Mammary epithelial cell (primary cell): ENCODE measurements at regions of chr11 and their contacts with region 1.

Region 1: GRCh38 chr11:3160252-3161031 is 4.7 kb downstream of the OSBPL5 start:
- DNase-seq: peak; percentile 75
- H3K4me3 ChIP-seq: peak overlapping the region; percentile 26 to 58 (median 46)
- H3K27ac ChIP-seq: no peak overlapping the region
- H3K4me1 ChIP-seq: peaks cover 48% of the 10 kb centered on the region
- H3K27me3 ChIP-seq: no peaks in the 10 kb centered on the region
- CTCF ChIP-seq: no peak

Region 2: DNA sequence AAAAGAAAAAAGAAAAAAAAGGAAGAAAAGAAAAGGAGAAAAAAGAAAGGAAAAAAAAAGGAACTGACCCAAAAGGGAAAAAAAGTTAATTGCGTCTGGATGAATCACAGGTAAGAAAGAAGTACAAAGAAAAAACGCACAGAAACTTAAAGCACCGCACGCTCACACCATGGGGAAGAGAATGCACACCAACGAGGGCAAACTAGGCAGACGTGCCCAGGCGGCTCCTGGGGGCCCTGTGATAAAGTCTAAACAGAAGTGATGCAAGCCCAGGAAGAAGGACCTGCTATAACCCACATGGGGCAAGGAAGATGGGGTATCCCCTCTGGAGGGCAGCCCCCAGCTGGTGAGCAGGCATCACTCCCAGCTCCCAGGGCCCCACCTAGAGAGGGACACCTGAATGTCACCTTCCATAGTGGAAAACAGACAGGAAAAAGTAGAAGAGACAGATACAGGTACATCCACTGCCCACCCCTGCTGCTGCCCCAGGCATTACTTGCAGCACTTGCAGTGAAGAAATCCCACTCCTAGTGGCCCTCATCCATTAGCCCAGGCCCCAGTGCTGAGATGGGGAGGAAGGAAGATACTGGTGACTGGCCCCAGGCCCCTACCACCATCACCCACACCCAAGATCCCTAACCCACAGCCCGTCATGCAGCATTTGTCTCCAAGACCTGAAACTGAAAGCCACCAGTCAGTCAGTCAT is 197.2 kb before region 1 on chr11:
- CTCF ChIA-PET with region 1: no interaction called
- dilution Hi-C with region 1: no loop called
- in situ Hi-C with region 1: no loop called
- intact Hi-C with region 1: no loop called
- DNase-seq: peak; percentile 29
- H3K4me3 ChIP-seq: no peak overlapping the region
- H3K27ac ChIP-seq: no peak overlapping the region
- H3K4me1 ChIP-seq: peaks cover 8% of the 10 kb centered on the region
- H3K27me3 ChIP-seq: no peaks in the 10 kb centered on the region
- CTCF ChIP-seq: no peak

Region 3: GRCh38 chr11:3109921-3110706 is 50.3 kb before region 1 on chr11:
- CTCF ChIA-PET with region 1: no interaction called
- dilution Hi-C with region 1: no loop called
- in situ Hi-C with region 1: no loop called
- intact Hi-C with region 1: loop called (anchors 2 kb)
- DNase-seq: peak; percentile 34
- H3K4me3 ChIP-seq: no peak overlapping the region
- H3K27ac ChIP-seq: no peak overlapping the region
- H3K4me1 ChIP-seq: no peaks in the 10 kb centered on the region
- H3K27me3 ChIP-seq: no peaks in the 10 kb centered on the region
- CTCF ChIP-seq: peak; percentile 61 to 77

Region 4: DNA sequence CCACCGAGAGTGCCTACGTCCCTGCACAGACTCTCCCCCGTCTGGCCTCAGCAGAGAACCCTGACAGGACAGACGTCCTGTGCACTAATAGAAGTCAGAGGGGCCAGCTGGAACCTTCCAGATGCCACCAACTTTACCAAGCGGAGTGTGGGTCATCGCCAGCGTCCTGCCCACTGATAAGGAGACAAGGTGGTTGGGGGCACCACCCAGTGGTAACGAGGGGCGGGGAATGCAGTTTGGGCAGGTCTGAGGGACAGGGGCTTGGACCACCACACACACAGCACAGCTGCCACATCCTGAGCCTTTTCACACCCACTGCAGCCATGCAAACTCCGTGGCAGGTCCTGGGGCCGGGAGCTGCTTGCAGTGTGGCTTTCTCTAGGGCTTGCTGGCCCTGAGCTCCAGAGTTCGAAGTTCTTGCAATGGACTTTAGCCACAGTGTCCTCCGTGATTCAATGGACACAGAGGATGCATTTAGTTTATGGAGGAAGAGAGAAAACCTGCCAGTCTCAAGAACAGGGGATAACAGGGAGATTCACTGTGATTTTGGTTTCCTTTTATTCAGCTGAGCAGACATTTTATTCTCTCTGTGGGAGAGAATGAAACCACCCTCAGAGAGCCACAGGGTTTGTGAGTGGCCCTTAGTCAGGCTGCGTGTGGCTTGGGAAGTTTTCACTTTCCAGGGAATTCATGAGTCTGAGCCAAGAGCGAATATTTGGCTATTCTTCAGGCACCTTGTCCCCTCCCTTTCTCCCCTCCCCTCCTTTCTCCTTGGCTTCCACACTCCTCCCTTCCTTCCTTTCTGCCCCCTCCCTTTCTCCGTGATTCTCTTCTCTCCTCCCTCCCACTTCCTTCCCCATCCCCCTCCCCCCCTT is 45.1 kb after region 1 on chr11:
- CTCF ChIA-PET with region 1: no interaction called
- dilution Hi-C with region 1: loop called (anchors 5 kb)
- in situ Hi-C with region 1: no loop called
- intact Hi-C with region 1: no loop called
- DNase-seq: no peak
- H3K4me3 ChIP-seq: no peak overlapping the region
- H3K27ac ChIP-seq: no peak overlapping the region
- H3K4me1 ChIP-seq: no peaks in the 10 kb centered on the region
- H3K27me3 ChIP-seq: peaks cover 26% of the 10 kb centered on the region
- CTCF ChIP-seq: no peak